GM12878 (cell line): ENCODE measurements at regions of chr15 and their contacts with region 1.

Region 1: DNA sequence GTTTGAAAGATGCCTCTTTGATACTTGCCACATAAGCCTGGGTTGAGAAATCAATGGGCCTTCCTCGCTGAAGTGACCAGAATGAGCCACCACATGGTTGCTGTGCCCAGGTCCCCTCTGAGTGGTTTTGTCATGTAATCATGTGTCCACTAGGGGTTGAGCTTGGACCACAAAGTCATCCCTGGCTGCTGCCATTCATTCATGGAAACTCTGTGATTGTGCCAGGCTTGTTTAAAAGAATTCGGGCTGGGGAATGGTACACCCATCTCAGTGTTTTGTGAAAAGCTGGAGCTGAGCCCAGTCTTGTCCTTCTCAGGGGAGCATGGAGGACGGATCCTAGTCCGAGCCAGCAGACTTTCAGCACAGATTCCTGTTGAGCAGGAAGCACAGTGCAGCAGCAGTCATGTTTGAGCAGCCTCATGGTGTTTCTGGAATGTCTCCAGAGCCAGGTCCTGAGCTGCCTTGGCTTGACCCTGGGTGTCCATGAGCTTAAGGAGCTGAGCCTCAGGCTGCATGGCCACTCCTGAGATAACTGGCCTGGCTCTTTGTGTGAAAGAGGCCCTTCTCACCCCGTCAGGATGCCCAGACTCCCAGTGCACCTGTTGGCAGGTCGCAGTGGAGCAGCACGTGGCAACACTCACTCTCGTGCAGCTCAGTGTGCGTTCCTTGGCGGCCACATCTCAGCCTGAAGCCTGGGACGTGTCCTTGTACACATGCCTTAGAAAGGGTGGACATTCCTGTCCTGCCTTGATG is 260.3 kb upstream of the TPM1 start:
- DNase-seq: no peak
- ATAC-seq: peak; percentile 91
- H3K4me3 ChIP-seq: no peak overlapping the region
- H3K27ac ChIP-seq: no peak overlapping the region
- H3K4me1 ChIP-seq: no peaks in the 10 kb centered on the region
- H3K27me3 ChIP-seq: peaks cover 0 to 2% of the 10 kb centered on the region in 2 experiments; a peak in 1 of 4 replicates
- CTCF ChIP-seq: peak; percentile 31 to 69 (median 36); a peak in 4 of 6 replicates
- EP300 ChIP-seq: no peak
- POLR2A ChIP-seq: no peak
- RAD21 ChIP-seq: peak; percentile 73

Region 2: DNA sequence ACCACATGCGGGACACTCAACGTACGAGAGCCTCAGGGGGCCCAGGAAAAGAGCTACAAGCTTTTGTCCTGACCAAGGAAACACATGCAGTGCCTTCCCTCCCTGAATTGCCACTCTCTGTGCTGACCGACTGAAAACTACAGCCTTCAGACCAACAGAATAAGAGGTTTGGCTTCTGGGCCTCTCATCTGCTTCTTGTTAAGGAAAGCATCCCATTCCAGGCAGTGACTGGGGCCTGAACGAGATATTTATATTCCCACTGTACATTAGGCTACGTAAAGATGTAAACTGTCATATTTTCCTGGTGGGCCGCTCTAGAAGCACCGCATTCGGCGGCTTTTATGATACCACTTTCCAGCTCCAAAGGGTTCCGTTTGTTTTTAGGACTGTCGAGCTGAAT is 51.4 kb after region 1 on chr15:
- CTCF ChIA-PET with region 1: no interaction called
- POLR2A ChIA-PET with region 1: no interaction called
- RAD21 ChIA-PET with region 1: no interaction called
- SMC1A ChIA-PET with region 1: no interaction called
- in situ Hi-C with region 1: loop called (anchors 5 kb)
- intact Hi-C with region 1: no loop called
- DNase-seq: no peak
- ATAC-seq: no peak
- H3K4me3 ChIP-seq: no peak overlapping the region
- H3K27ac ChIP-seq: no peak overlapping the region
- H3K4me1 ChIP-seq: no peaks in the 10 kb centered on the region
- H3K27me3 ChIP-seq: no peaks in the 10 kb centered on the region
- CTCF ChIP-seq: no peak
- EP300 ChIP-seq: no peak
- POLR2A ChIP-seq: no peak
- RAD21 ChIP-seq: no peak